Activated CD4-positive, alpha-beta T cell treated with anti-CD3 and anti-CD28 coated beads for 36 hours (primary cell): ENCODE measurements at regions of chr3 and their contacts with region 1.

Region 1: DNA sequence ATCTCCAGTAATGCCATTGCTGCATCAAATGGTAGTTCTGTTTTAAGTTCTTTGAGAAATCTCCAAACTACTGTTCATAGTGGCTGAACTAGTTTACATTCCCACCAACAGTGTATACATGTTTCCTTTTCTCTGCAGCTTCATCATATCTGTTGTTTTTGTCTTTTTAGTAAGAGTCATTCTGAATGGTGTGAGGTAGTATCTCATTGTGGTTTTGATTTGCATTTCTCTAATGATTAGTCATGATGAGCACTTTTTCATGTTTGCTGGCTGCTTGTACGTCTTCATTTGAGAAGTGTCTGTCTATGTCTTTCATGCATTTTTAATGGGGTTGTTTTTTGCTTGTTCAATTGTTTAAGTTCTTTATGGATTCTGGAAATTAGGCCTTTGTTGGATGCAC is 10.2 kb upstream of the GCSAM start:
- DNase-seq: no peak
- ATAC-seq: peak; percentile 90
- H3K4me3 Mint-ChIP-seq: peak overlapping the region; percentile 6
- H3K27ac Mint-ChIP-seq: peak overlapping the region; percentile 64
- H3K4me1 Mint-ChIP-seq: peaks cover 26% of the 10 kb centered on the region
- H3K27me3 Mint-ChIP-seq: no peaks in the 10 kb centered on the region

Region 2: GRCh38 chr3:112199619-112200316 is 56.5 kb after region 1 on chr3:
- CTCF ChIA-PET with region 1: no interaction called
- POLR2A ChIA-PET with region 1: no interaction called
- intact Hi-C with region 1: loop called in 1 of 2 experiments (anchors 10 kb)
- DNase-seq: no peak
- ATAC-seq: no peak
- H3K4me3 Mint-ChIP-seq: no peak overlapping the region
- H3K27ac Mint-ChIP-seq: no peak overlapping the region
- H3K4me1 Mint-ChIP-seq: no peaks in the 10 kb centered on the region
- H3K27me3 Mint-ChIP-seq: peaks cover 3% of the 10 kb centered on the region